Naive thymus-derived CD8-positive, alpha-beta T cell (primary cell): ENCODE measurements at regions of chr1 and their contacts with region 1.

Region 1: DNA sequence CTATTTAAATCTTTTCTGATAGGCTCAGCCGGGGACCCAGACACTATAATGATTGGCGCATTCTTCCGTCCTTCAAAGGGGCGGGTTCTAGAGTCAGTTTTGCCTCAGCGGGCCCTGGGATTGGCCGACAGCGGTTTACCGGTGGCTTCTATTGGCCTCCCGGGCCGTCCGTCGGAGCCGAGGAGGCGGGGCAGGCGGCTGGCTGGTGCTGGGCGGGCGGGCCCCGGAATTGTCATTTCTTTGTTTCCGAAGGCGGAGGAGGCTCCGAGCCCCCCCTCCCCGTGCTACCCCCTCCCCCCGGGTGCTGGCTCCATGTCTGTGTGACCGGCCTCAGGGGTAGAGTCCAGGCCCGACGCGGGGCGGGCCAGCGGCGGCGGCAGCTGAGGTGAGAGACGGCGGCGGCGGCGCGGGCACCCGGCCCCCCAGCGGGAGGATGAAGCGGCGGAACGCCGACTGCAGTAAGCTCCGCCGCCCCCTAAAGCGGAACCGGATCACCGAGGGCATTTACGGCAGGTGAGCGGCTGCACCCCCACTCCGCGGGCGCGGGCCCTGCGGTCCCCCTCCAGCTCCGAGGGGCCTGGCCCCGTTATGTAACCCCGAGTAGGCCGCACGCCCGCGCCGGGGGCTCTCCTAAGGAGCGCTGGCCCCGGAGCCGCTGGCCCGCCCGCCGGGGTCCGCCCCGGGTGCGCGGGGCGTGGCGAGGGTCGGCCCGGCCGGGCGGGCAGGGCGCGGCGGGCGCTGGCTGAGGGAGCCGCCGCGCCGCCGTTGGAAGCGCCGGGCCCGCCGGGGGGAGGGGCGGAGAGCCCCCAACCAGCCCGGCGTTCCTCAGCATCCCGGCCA is at the start of gene MACO1:
- DNase-seq: peak; percentile 94 to 99 (median 98)
- ATAC-seq: peak; percentile 84
- H3K4me3 Mint-ChIP-seq: peak within 1 kb of the TSS; percentile 93 to 99 (median 98)
- H3K27ac Mint-ChIP-seq: peak within 1 kb of the TSS; percentile 98 to 100 (median 100)
- H3K4me1 Mint-ChIP-seq: peaks cover 26 to 54% (median 47%) of the 10 kb centered on the region in 4 donors
- H3K27me3 Mint-ChIP-seq: no peaks in the 10 kb centered on the region
- polyA plus RNA-seq, gene MACO1: 7.6 to 8.8 (median 7.6) TPM

Region 2: GRCh38 chr1:25443030-25443699 is 12.3 kb after region 1 on chr1:
- POLR2A ChIA-PET with region 1: no interaction called
- DNase-seq: peak in 1 of 10 donors; percentile 33
- ATAC-seq: peak; percentile 79 to 86
- H3K4me3 Mint-ChIP-seq: peak overlapping the region in 9 of 10 donors; percentile 4 to 58 (median 33)
- H3K27ac Mint-ChIP-seq: peak overlapping the region in 9 of 10 donors; percentile 9 to 91 (median 53)
- H3K4me1 Mint-ChIP-seq: peaks cover 24 to 52% (median 44%) of the 10 kb centered on the region in 4 donors
- H3K27me3 Mint-ChIP-seq: no peaks in the 10 kb centered on the region

Region 3: GRCh38 chr1:25476186-25477097 is 45.6 kb after region 1 on chr1:
- POLR2A ChIA-PET with region 1: interaction called, 20 read pairs
- DNase-seq: peak in 1 of 10 donors; percentile 13
- ATAC-seq: peak in 1 of 2 donors; percentile 29
- H3K4me3 Mint-ChIP-seq: peak overlapping the region in 7 of 10 donors; percentile 14 to 57 (median 40)
- H3K27ac Mint-ChIP-seq: peak overlapping the region; percentile 67 to 99 (median 86)
- H3K4me1 Mint-ChIP-seq: peaks cover 26 to 66% (median 60%) of the 10 kb centered on the region in 4 donors
- H3K27me3 Mint-ChIP-seq: no peaks in the 10 kb centered on the region